IMR-90 (cell line): ENCODE measurements at regions of chr11 and their contacts with region 1.

Region 1: DNA sequence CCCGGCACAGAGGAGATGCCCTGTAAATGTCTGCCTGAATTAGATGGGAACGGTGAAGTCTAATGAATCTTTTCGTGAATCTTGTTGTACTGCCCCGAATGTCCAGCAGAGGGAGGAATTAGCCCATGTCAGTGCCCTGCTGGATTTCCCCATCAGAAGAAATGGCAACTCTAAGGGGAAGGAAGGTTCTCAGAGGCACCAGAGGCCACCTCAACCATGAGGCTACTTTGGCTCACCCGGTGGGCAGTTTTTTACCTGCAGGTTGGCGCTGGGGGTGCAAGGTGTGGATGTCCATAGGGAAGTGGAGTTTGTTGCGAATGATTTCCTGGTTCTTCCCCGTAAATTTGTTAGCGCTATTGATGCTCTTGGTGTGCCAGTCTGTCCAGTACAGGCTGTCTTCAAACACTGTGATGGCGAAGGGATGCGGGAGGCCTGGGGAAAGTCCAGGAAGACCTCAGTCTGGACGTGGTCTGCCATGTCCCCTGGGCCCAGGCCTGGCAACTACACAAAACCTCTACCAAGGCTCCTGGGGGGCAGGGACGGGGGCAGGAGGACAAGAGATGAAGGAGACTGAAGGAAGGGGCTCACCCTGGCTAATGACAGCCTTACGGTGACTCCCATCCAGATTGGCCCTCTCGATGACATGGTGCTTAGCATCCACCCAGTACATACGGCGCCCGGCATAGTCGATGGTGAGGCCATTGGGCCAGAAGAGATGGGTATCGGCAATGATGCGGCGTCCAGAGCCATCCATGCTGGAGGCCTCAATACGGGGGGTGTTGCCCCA is 28.5 kb downstream of the LRP4 start:
- DNase-seq: peak; percentile 73
- ATAC-seq: peak; percentile 97
- H3K4me3 ChIP-seq: no peak overlapping the region
- H3K27ac ChIP-seq: no peak overlapping the region
- H3K4me1 ChIP-seq: no peaks in the 10 kb centered on the region; the same call in 1 of the 2 replicates
- H3K27me3 ChIP-seq: no peaks in the 10 kb centered on the region
- CTCF ChIP-seq: peak; percentile 97
- POLR2A ChIP-seq: 0 out of 2 replicates have a peak, but pooled peaks have one; percentile 45
- RAD21 ChIP-seq: peak; percentile 99

Region 2: DNA sequence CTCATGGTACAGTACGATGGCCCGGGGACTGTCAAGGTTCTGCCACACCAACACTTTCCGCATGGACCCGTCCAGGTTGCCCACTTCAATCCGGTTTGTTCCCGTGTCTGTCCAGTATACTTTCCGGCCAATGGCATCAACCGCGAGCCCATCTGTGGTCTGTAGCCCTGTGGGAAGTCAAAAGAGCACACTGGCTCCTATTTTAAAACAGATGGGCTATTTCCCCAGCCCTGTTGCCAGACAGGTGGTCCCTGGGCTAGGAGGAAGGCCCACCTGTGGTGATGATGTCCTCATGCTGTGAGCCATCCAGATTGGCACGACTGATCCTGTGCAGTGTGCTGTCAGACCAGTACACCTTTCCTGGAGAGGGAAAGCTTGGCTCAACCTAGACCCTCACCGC is 13.4 kb before region 1 on chr11:
- CTCF ChIA-PET with region 1: no interaction called
- POLR2A ChIA-PET with region 1: no interaction called
- dilution Hi-C with region 1: no loop called
- in situ Hi-C with region 1: no loop called
- intact Hi-C with region 1: no loop called
- DNase-seq: no peak
- ATAC-seq: no peak
- H3K4me3 ChIP-seq: no peak overlapping the region
- H3K27ac ChIP-seq: no peak overlapping the region
- H3K4me1 ChIP-seq: no peaks in the 10 kb centered on the region
- H3K27me3 ChIP-seq: no peaks in the 10 kb centered on the region
- CTCF ChIP-seq: no peak
- POLR2A ChIP-seq: no peak
- RAD21 ChIP-seq: no peak

Region 3: GRCh38 chr11:46916286-46917108 is 26.6 kb after region 1 on chr11:
- CTCF ChIA-PET with region 1: interaction called, 4 read pairs
- POLR2A ChIA-PET with region 1: no interaction called
- dilution Hi-C with region 1: no loop called
- in situ Hi-C with region 1: no loop called
- intact Hi-C with region 1: loop called (anchors 1 kb)
- DNase-seq: peak; percentile 78
- ATAC-seq: peak; percentile 52
- H3K4me3 ChIP-seq: peak overlapping the region; percentile 59
- H3K27ac ChIP-seq: no peak overlapping the region
- H3K4me1 ChIP-seq: peaks cover 13% of the 10 kb centered on the region
- H3K27me3 ChIP-seq: no peaks in the 10 kb centered on the region
- CTCF ChIP-seq: peak; percentile 34; the same call in 1 of the 2 replicates
- POLR2A ChIP-seq: no peak
- RAD21 ChIP-seq: no peak; the same call in 1 of the 2 replicates

Region 4: DNA sequence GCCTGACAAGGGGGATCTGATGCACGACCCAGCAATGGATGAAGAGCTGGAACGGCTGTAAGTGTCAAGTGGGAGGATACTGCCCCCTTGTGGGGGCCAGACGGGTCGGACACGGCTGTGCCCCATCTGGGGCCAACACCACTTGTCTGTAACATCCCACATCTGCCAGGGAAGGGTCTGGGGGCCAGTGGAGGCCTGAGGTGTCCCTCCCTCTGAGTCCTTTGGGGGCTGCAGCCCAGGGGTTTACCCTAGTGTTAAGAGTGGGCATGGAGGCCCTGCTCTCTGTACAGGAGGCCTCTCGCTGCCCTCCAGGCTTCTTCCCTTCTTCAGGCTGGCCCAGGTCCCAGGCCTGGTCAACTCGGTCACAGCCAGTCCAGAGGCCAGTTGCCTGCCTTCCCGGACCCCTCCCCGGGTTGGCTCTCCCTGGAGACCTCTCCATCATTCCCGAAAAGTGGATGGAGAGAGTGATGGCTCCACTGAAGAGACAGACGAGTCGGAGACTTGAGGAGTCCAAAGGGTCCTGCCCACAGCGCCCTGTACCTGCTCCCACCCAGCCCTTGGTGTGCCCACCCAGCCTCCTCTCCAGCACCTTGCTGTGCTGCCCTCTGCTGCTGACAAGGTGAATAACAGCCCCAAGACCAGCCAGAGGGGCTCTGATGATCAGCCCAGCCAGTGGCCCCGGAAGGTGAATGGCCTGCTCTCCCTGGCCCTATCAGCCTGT is 271.4 kb after region 1 on chr11:
- CTCF ChIA-PET with region 1: no interaction called
- POLR2A ChIA-PET with region 1: no interaction called
- dilution Hi-C with region 1: no loop called
- in situ Hi-C with region 1: no loop called
- intact Hi-C with region 1: loop called (anchors 1 kb)
- DNase-seq: peak; percentile 69
- ATAC-seq: peak; percentile 83
- H3K4me3 ChIP-seq: no peak overlapping the region
- H3K27ac ChIP-seq: no peak overlapping the region
- H3K4me1 ChIP-seq: no peaks in the 10 kb centered on the region
- H3K27me3 ChIP-seq: no peaks in the 10 kb centered on the region
- CTCF ChIP-seq: peak; percentile 81
- POLR2A ChIP-seq: no peak; the same call in 1 of the 2 replicates
- RAD21 ChIP-seq: peak; percentile 86

Region 5: DNA sequence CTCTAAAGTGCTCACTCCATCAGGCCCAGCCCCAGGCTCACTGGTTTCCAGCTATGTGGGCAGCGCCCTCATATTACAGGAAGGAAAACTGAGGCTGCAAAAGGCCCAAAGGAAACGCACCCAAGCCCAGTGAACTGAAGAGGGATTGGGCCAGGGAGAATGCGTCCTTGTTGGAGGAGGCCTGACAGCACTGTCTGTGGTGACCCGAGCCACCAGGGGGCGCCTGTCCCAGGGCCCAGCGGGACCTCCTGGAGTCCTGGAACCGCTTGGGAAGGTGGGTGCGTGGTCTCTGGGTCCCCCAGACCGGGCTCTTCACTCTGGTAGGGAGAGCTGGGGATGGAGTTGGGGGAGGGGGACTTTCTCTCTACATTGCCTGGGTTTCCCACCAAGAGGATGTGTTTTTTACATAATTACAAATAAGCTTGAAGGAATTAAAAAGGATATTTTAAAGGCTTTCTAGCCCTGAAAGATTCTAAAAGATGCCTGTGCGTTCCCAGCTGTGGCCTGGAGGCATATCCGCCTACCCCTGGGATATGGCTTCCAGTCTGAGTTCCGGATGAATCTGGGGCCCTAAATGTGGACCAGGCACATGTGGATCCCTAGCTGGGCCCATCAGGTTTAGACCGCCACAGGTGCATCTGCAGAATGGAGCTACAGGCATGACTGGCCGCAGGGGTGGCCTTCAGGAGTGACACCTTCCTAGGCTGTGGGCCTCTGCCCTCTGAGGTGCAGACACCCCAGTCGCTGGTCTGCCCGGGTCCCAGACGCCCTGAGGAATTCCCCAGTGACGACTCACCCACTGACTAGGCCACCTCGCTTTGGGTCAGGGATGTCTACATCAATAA is 484.2 kb after region 1 on chr11:
- CTCF ChIA-PET with region 1: no interaction called
- POLR2A ChIA-PET with region 1: no interaction called
- dilution Hi-C with region 1: no loop called
- in situ Hi-C with region 1: loop called (anchors 25 kb)
- intact Hi-C with region 1: no loop called
- DNase-seq: peak; percentile 62
- ATAC-seq: peak; percentile 98
- H3K4me3 ChIP-seq: no peak overlapping the region
- H3K27ac ChIP-seq: no peak overlapping the region
- H3K4me1 ChIP-seq: peaks cover 5% of the 10 kb centered on the region
- H3K27me3 ChIP-seq: peaks cover 4% of the 10 kb centered on the region
- CTCF ChIP-seq: peak; percentile 88
- POLR2A ChIP-seq: no peak
- RAD21 ChIP-seq: peak; percentile 76